Common myeloid progenitor, CD34-positive (primary cell): ENCODE measurements at regions of chr1 and their contacts with region 1.

Region 1: DNA sequence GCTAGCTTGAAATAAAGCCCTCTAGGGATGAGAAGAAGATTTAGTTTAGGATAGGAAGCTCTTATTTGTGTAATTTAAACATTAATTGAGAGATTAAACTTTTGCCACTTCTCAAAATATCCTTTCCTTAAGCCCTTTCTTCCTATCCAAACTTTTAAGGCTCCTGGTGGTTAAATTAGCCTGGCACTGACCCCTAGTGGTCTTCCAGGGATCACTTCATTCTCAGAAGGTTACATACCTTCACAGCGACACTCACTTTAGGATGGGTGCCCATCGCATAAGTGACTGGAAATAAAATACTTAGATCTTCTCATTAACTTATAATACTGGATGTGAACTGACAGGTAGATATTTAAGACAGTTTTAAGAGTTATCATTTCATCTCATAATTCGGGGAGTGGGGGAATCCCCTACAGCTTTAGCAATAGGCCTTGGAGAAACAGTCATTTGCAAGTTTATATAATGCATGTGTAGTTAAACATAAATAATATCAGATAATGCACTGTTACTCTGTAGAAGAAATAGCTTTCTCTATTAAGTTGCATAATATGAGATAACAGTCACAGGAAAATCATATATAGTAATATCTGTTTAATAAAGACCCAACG is 7.4 kb downstream of the LHX9 start:
- DNase-seq: peak; percentile 66 to 76 (median 75)
- H3K4me3 ChIP-seq: no peak overlapping the region
- H3K27ac ChIP-seq: no peak overlapping the region
- H3K4me1 ChIP-seq: peaks cover 0 to 18% (median 11%) of the 10 kb centered on the region in 4 experiments
- H3K27me3 ChIP-seq: peaks cover 22 to 94% (median 37%) of the 10 kb centered on the region in 5 experiments

Region 2: DNA sequence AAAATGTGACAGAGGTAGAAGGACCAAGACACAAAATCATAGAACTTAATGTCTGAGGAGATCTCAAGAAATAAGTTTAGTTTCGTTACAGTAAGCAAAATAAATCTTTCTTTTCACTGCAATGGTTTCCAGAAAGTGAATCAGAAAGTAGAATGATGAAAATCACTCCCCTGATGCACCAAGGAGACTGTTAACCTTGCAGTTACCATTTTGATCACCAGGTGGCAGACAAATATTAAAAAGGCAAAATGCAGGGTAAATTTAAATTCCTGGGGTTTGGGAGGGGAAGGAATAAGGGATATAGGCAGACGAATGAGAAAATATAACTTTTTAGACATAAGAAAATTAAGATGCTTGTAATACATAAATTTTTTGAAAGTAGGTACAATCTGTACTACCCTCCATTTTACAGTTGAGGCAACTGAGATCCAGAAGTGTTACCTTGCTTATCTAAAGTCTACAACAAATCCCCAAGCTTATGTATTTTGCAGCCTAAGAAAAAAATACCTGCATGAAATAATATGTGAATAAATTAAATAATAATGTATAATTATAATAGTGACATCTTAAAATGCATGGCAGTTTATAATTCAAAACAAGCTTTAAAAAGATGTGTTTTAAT is 403.4 kb before region 1 on chr1:
- CTCF ChIA-PET with region 1: interaction called, 12 read pairs
- POLR2A ChIA-PET with region 1: no interaction called
- DNase-seq: peak; percentile 50 to 76 (median 69)
- H3K4me3 ChIP-seq: no peak overlapping the region
- H3K27ac ChIP-seq: no peak overlapping the region
- H3K4me1 ChIP-seq: no peaks in the 10 kb centered on the region
- H3K27me3 ChIP-seq: no peaks in the 10 kb centered on the region

Region 3: GRCh38 chr1:197902454-197903195 is 22.0 kb before region 1 on chr1 and contains the start of gene C1orf53:
- CTCF ChIA-PET with region 1: interaction called, 136 read pairs
- POLR2A ChIA-PET with region 1: no interaction called
- DNase-seq: peak; percentile 74 to 85 (median 79)
- H3K4me3 ChIP-seq: peak within 1 kb of the TSS; percentile 50 to 86 (median 77)
- H3K27ac ChIP-seq: no peak within 1 kb of the TSS
- H3K4me1 ChIP-seq: peaks cover 8 to 17% (median 12%) of the 10 kb centered on the region in 4 experiments
- H3K27me3 ChIP-seq: peaks cover 7 to 78% (median 40%) of the 10 kb centered on the region in 5 experiments

Region 4: GRCh38 chr1:197954718-197955418 is 30.2 kb after region 1 on chr1:
- CTCF ChIA-PET with region 1: no interaction called
- POLR2A ChIA-PET with region 1: no interaction called
- DNase-seq: no peak
- H3K4me3 ChIP-seq: no peak overlapping the region
- H3K27ac ChIP-seq: no peak overlapping the region
- H3K4me1 ChIP-seq: no peaks in the 10 kb centered on the region
- H3K27me3 ChIP-seq: no peaks in the 10 kb centered on the region

Region 5: DNA sequence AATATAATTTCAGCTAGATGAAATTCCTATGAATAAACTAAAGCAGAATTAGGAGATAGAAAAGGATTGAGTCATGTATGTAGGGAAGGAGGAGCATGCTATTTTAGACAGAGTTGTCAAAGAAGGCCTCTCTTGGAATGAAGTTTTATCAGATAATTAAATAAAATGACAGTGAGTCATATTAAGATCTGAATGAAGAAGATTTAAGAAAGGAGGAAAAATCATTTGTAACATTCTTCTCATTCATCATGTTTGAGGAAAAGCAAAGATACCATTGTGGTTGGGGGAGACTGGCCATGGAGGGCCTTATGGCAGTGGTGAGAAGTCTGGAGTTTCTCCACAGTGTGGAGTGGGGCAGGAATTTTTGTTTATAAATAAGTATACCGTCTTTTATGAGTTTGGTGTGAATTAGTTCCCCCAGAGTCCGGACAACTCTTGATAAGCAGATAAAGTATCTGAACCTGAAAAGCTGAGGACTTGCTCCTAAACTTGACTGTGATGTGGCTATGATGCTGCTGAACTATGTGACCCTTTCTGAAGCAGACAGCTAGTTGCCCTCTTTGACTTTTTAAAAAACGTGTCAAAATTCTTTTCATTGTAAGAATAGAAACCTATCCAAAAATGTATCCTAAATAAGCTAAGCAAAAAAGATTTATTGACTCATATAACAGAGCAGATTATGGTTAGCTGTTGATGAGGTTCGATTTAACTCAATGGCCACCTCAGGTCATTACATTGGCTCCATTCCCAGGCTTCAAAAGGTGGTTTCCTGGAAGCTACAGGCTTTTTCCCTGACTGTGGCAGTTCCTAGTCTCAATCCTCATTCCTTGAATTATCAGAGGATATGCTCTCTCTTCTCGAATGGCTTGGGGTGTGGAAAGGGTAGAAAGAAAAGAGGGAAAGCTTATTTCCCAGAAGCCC is 83.3 kb after region 1 on chr1:
- CTCF ChIA-PET with region 1: no interaction called
- POLR2A ChIA-PET with region 1: no interaction called
- DNase-seq: no peak
- H3K4me3 ChIP-seq: no peak overlapping the region
- H3K27ac ChIP-seq: no peak overlapping the region
- H3K4me1 ChIP-seq: no peaks in the 10 kb centered on the region
- H3K27me3 ChIP-seq: no peaks in the 10 kb centered on the region